T-cell (primary cell): ENCODE measurements at regions of chr11 and their contacts with region 1.

Region 1: GRCh38 chr11:123020968-123021367 is 39.3 kb upstream of the BSX start:
- DNase-seq: peak in 19 of 35 experiments; percentile 1 to 56 (median 9)
- ATAC-seq: peak; percentile 43 to 73 (median 60)
- H3K4me3 ChIP-seq: no peak overlapping the region
- H3K4me3 Mint-ChIP-seq: no peak overlapping the region
- H3K27ac ChIP-seq: no peak overlapping the region
- H3K27ac Mint-ChIP-seq: no peak overlapping the region
- H3K4me1 ChIP-seq: peaks cover 0 to 5% of the 10 kb centered on the region in 2 experiments
- H3K4me1 Mint-ChIP-seq: peaks cover 6 to 8% (median 8%) of the 10 kb centered on the region in 3 donors
- H3K27me3 ChIP-seq: peaks cover 0 to 12% of the 10 kb centered on the region in 2 experiments
- H3K27me3 Mint-ChIP-seq: peaks cover 4 to 10% of the 10 kb centered on the region in 2 donors

Region 2: DNA sequence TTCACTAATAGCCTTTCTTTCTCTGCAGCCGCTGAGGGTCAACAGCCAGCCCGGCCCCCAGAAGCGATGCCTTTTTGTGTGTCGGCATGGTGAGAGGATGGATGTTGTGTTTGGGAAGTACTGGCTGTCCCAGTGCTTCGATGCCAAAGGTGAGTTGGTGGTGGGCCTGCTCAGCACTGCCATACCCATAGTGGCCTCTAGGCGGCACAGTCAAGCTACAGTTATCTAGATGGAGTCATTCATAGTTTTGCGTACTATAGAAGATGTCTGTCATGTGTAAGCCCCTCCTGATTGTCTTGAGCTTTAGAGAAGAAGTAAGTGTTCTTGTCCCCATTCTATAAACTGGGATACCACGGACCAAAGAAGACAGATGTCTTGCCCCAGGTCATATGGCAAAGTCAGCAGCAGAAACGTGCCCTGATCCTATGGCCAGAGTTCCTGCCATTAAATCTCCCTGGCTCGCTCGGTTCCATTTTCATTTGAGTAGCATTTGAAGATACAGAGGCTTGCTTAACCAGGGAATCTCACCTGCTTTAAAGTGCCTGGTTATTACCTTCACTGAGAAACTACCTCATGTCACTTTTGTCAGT is 224.7 kb before region 1 on chr11:
- CTCF ChIA-PET with region 1: interaction called in 1 of 2 experiments, 11 read pairs
- POLR2A ChIA-PET with region 1: no interaction called
- DNase-seq: peak; percentile 12 to 80 (median 64)
- ATAC-seq: peak; percentile 81 to 86 (median 84)
- H3K4me3 ChIP-seq: no peak overlapping the region
- H3K4me3 Mint-ChIP-seq: no peak overlapping the region
- H3K27ac ChIP-seq: no peak overlapping the region
- H3K27ac Mint-ChIP-seq: no peak overlapping the region
- H3K4me1 ChIP-seq: peaks cover 0 to 2% of the 10 kb centered on the region in 2 experiments
- H3K4me1 Mint-ChIP-seq: peaks cover 0 to 8% (median 0%) of the 10 kb centered on the region in 3 donors
- H3K27me3 ChIP-seq: no peaks in the 10 kb centered on the region
- H3K27me3 Mint-ChIP-seq: no peaks in the 10 kb centered on the region

Region 3: GRCh38 chr11:123039605-123040432 is 18.9 kb after region 1 on chr11:
- CTCF ChIA-PET with region 1: interaction called, 9 to 10 read pairs
- POLR2A ChIA-PET with region 1: no interaction called
- DNase-seq: no peak
- ATAC-seq: no peak
- H3K4me3 ChIP-seq: no peak overlapping the region
- H3K4me3 Mint-ChIP-seq: no peak overlapping the region
- H3K27ac ChIP-seq: no peak overlapping the region
- H3K27ac Mint-ChIP-seq: no peak overlapping the region
- H3K4me1 ChIP-seq: no peaks in the 10 kb centered on the region
- H3K4me1 Mint-ChIP-seq: no peaks in the 10 kb centered on the region
- H3K27me3 ChIP-seq: peaks cover 0 to 10% of the 10 kb centered on the region in 2 experiments
- H3K27me3 Mint-ChIP-seq: no peaks in the 10 kb centered on the region

Region 4: DNA sequence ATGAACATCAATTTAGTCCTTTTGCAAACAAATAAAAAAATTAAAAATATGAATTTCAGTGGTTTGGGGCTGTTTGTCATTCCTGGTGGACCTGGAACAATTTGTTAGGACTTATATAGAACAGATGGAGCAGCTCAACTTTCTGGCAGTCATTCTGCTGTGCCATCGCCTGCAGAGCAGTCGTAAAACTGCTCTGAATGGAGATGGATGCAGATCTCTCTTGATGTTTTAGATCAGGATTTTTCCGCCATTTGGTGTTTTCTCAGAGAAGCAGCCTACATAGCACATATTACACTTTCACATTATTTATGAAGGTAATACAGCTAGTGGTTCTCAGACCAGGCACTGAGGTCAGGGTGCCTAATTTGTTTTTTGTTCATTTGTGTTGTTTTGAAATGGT is 72.8 kb after region 1 on chr11:
- CTCF ChIA-PET with region 1: no interaction called
- POLR2A ChIA-PET with region 1: no interaction called
- DNase-seq: no peak
- ATAC-seq: no peak
- H3K4me3 ChIP-seq: no peak overlapping the region
- H3K4me3 Mint-ChIP-seq: no peak overlapping the region
- H3K27ac ChIP-seq: no peak overlapping the region
- H3K27ac Mint-ChIP-seq: no peak overlapping the region
- H3K4me1 ChIP-seq: peaks cover 0 to 6% of the 10 kb centered on the region in 2 experiments
- H3K4me1 Mint-ChIP-seq: peaks cover 13 to 22% (median 21%) of the 10 kb centered on the region in 3 donors
- H3K27me3 ChIP-seq: no peaks in the 10 kb centered on the region
- H3K27me3 Mint-ChIP-seq: no peaks in the 10 kb centered on the region

Region 5: DNA sequence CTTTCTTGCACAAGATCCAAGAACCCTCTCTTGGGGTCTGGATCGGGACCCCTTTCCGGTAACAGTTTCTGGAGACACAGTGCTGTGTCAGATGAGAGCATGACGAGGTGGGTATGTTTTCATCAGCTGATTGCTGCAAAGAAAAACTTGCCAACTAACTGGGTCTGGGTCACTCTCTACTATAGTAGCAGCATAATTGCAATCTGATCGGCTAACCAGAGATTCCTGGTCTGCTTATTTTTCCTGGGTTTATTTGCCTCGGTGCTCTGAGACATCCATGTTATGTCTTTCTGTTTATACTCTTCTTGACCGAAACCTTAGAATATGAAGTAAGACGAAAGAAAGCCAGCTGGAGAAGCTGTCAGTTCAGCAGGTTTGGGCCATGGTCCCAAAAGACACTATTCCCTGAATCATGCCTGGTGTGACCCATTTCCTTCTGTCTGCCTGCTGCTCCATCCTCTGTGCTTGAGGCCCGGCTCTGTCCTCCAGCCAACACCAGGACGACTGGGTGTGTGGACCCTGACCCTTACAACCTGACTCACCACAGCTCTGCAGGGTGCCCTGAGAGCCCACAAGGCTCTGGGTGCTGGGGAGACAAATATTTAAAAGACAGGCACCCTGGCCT is 198.2 kb after region 1 on chr11:
- CTCF ChIA-PET with region 1: no interaction called
- POLR2A ChIA-PET with region 1: no interaction called
- DNase-seq: no peak
- ATAC-seq: no peak
- H3K4me3 ChIP-seq: no peak overlapping the region
- H3K4me3 Mint-ChIP-seq: no peak overlapping the region
- H3K27ac ChIP-seq: no peak overlapping the region
- H3K27ac Mint-ChIP-seq: no peak overlapping the region
- H3K4me1 ChIP-seq: no peaks in the 10 kb centered on the region
- H3K4me1 Mint-ChIP-seq: no peaks in the 10 kb centered on the region
- H3K27me3 ChIP-seq: peaks cover 0 to 8% of the 10 kb centered on the region in 2 experiments
- H3K27me3 Mint-ChIP-seq: peaks cover 12 to 17% of the 10 kb centered on the region in 2 donors